IMR-90 (cell line): ENCODE measurements at regions of chr5 and their contacts with region 1.

Region 1: GRCh38 chr5:173069671-173070070 is 13.5 kb downstream of the CREBRF start:
- DNase-seq: no peak
- ATAC-seq: no peak
- H3K4me3 ChIP-seq: no peak overlapping the region
- H3K27ac ChIP-seq: no peak overlapping the region
- H3K4me1 ChIP-seq: no peaks in the 10 kb centered on the region
- H3K27me3 ChIP-seq: no peaks in the 10 kb centered on the region
- CTCF ChIP-seq: no peak
- POLR2A ChIP-seq: no peak
- RAD21 ChIP-seq: no peak

Region 2: DNA sequence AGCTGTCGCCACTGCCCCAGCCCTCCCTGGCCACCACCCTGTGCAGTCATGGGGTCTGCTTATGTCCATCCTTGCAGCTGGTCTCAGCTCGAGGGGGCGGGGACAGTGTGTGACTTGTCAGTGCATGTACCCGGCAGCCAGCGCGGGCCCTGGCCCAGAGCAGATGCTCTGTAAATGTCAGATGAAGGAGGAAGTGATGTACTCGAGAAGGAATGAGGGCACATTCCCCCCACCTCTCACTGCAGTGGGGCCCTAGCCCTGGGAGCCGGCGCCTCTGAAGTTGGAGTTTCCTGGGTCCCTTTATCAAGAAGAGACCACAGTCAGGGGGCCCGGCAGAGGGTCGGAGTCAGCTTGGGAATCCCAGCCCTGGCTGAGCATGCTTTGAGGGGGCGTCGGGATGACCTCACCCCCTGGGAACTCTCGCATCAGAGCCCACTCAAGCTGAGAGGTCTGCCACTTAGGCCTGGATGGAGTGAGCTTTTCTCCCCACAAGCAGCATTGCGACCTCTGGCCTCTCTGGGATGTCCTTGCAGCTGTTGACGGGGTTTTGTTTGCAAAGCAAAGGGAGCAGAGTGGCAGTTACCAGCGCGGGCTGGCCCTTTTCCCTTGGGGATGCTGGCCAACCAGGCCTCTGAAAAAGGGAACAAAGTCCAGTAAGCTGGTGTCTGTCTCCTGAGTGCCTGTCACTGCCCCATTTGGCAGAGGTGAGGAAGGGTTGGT is 409.6 kb before region 1 on chr5:
- CTCF ChIA-PET with region 1: no interaction called
- POLR2A ChIA-PET with region 1: no interaction called
- dilution Hi-C with region 1: no loop called
- in situ Hi-C with region 1: no loop called
- intact Hi-C with region 1: no loop called
- DNase-seq: peak; percentile 94
- ATAC-seq: peak; percentile 89
- H3K4me3 ChIP-seq: no peak overlapping the region
- H3K27ac ChIP-seq: peak overlapping the region; percentile 91
- H3K4me1 ChIP-seq: peaks cover 40% of the 10 kb centered on the region
- H3K27me3 ChIP-seq: no peaks in the 10 kb centered on the region
- CTCF ChIP-seq: 0 out of 2 replicates have a peak, but pooled peaks have one; percentile 11
- POLR2A ChIP-seq: peak; percentile 44; the same call in 1 of the 2 replicates
- RAD21 ChIP-seq: no peak

Region 3: GRCh38 chr5:173035904-173036707 is 33.6 kb before region 1 on chr5:
- CTCF ChIA-PET with region 1: no interaction called
- POLR2A ChIA-PET with region 1: no interaction called
- dilution Hi-C with region 1: no loop called
- in situ Hi-C with region 1: no loop called
- intact Hi-C with region 1: no loop called
- DNase-seq: no peak
- ATAC-seq: no peak
- H3K4me3 ChIP-seq: no peak overlapping the region
- H3K27ac ChIP-seq: peak overlapping the region; percentile 73; the same call in 1 of the 2 replicates
- H3K4me1 ChIP-seq: peaks cover 9% of the 10 kb centered on the region
- H3K27me3 ChIP-seq: no peaks in the 10 kb centered on the region
- CTCF ChIP-seq: no peak
- POLR2A ChIP-seq: no peak
- RAD21 ChIP-seq: no peak

Region 4: GRCh38 chr5:173094012-173094661 is 24.5 kb after region 1 on chr5:
- CTCF ChIA-PET with region 1: interaction called, 12 read pairs
- POLR2A ChIA-PET with region 1: no interaction called
- dilution Hi-C with region 1: no loop called
- in situ Hi-C with region 1: no loop called
- intact Hi-C with region 1: no loop called
- DNase-seq: peak; percentile 94
- ATAC-seq: peak; percentile 90
- H3K4me3 ChIP-seq: no peak overlapping the region
- H3K27ac ChIP-seq: peak overlapping the region; percentile 69; the same call in 1 of the 2 replicates
- H3K4me1 ChIP-seq: peaks cover 9% of the 10 kb centered on the region
- H3K27me3 ChIP-seq: no peaks in the 10 kb centered on the region
- CTCF ChIP-seq: no peak
- POLR2A ChIP-seq: no peak
- RAD21 ChIP-seq: no peak

Region 5: GRCh38 chr5:173352366-173353349 is 283.0 kb after region 1 on chr5:
- CTCF ChIA-PET with region 1: no interaction called
- POLR2A ChIA-PET with region 1: no interaction called
- dilution Hi-C with region 1: no loop called
- in situ Hi-C with region 1: no loop called
- intact Hi-C with region 1: no loop called
- DNase-seq: no peak
- ATAC-seq: no peak
- H3K4me3 ChIP-seq: no peak overlapping the region
- H3K27ac ChIP-seq: no peak overlapping the region
- H3K4me1 ChIP-seq: peaks cover 10% of the 10 kb centered on the region
- H3K27me3 ChIP-seq: no peaks in the 10 kb centered on the region; the same call in 1 of the 2 replicates
- CTCF ChIP-seq: no peak
- POLR2A ChIP-seq: no peak
- RAD21 ChIP-seq: no peak